Stomach (tissue), 19 donors: ENCODE measurements at regions of chr11 and their contacts with region 1.

Region 1: DNA sequence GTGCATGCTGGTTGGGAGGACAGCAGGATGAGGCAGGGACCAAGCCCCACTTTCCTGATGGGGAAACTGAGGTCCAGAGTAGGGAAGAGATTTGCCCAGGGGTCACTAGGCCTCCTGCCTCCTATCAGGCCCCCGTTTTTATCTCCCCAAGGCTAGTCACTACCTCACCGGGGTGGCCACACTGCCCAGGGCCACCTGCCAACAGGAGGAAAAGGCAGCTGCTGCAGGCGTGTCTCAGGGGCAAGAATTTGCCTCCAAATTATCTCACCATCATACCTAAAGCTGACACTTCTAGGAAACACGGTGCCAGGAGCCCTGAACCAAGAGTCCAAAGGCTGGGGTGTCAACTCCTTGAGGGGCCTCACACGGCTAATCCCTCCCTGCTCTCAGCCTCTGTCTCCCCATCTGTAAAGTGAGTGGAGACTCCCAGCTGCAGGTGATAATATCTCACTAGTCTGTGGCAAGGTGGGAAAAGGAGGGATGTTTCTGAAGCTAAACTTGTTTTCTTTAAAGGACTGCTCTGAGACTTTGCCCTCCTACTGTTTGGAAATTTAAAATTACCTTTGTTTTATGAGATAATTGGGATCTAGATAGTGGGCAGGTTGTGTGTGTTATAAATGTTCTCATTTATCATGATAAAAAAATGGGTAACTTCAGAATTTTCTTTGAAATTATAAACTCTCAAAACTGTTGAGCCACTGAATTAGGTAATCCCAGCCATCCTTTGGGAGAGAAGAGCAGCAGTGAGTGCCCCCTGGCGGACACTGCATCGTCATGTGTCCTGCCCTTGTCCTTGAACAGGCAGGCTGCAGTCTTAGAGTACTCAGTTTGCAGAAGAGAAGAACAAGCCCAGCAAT is 60.0 kb downstream of the MYO7A start:
- DNase-seq: peak; percentile 87 to 94
- H3K4me3 ChIP-seq: no peak overlapping the region
- H3K27ac ChIP-seq: no peak overlapping the region
- H3K4me1 ChIP-seq: peaks cover 0 to 9% (median 2%) of the 10 kb centered on the region in 4 donors
- H3K27me3 ChIP-seq: no peaks in the 10 kb centered on the region
- CTCF ChIP-seq: peak in 5 of 7 experiments; percentile 70 to 85 (median 81)
- EP300 ChIP-seq: no peak
- POLR2A ChIP-seq: no peak

Region 2: DNA sequence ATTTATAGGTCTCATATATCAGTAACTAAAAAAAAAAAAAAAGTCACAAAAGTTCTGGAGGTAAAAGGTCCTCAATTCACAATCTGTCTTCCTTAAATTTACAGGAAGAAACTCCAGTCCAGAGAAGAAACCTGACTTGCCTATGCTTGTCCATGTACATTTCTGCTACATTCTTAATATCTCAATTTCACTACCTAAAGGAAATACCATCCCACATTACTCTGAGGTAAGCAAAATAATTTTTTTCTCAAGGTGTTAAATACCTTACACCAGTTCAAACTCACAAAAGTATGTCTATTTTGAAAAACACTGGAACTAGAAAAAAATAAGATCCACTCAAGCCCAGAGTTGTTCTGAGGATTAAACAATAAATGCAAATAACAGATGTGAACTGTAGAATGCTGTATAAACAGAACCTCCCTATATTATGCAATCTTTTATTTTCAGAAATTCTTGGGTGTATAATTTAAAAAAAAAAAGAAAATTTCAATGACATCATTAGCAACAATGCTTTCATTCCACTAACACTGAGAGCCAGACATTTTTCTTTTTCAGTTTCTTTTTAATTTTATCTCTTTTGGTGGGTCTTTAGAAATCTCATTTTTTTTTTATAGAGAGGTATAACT is 163.4 kb after region 1 on chr11:
- intact Hi-C with region 1: no loop called
- DNase-seq: peak in 1 of 2 donors; percentile 25
- H3K4me3 ChIP-seq: no peak overlapping the region
- H3K27ac ChIP-seq: no peak overlapping the region
- H3K4me1 ChIP-seq: peaks cover 0 to 29% (median 7%) of the 10 kb centered on the region in 4 donors
- H3K27me3 ChIP-seq: no peaks in the 10 kb centered on the region
- CTCF ChIP-seq: no peak
- EP300 ChIP-seq: no peak
- POLR2A ChIP-seq: no peak

Region 3: GRCh38 chr11:77549821-77550550 is 362.0 kb after region 1 on chr11:
- intact Hi-C with region 1: loop called (anchors 5 kb)
- DNase-seq: no peak
- H3K4me3 ChIP-seq: no peak overlapping the region
- H3K27ac ChIP-seq: no peak overlapping the region
- H3K4me1 ChIP-seq: peaks cover 0 to 10% (median 4%) of the 10 kb centered on the region in 4 donors
- H3K27me3 ChIP-seq: no peaks in the 10 kb centered on the region
- CTCF ChIP-seq: no peak
- EP300 ChIP-seq: no peak
- POLR2A ChIP-seq: no peak